K562 (cell line): ENCODE measurements at regions of chr9 and their contacts with region 1.

Region 1: DNA sequence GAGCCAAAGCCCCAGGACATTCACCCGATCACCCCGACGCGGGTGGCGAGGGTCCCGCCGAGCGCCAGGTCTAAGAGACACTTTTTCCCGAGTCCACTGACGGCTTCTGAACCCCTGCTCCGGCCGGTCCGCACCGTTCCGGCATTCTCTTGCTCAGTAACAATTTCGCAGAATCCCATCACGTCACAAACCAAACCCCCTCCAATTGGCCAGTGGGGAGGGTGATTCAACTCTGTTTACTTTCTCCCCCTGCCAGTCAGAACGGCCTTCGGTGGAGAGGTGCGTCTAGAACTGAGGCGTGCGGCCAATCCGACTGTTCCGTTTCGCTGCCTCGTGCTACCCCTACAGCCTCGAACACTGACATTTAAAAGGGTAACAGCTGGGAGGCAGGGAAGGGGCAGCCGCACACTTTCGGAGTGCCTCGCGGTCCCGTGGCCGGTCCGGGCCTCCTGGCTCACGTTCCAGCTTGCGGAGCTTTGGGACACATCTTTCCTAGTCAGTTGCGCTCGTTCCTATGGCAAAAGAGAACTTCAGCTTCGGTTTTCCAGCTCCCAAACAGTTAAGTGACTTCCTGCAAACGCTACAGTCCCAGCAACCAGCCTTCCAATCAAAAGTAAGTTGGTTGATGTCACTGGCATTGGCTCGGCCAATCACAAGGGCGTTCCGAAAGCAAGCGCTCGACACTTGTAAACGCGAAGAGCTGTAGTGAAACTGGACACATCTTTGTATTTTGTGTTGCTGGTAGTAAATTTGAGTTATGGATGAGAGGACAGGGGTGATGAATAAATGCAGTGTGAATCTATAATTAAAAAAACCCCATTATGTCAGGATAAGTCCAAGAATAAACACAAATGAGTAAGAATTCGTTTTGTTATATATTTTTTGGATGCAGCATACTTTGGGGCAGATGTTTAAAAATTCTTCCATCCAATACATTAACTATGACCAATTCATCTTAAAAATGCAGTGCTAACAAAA is at the start of gene KLF9:
- DNase-seq: peak; percentile 52 to 91 (median 75)
- ATAC-seq: peak; percentile 80
- H3K4me3 ChIP-seq: peak within 1 kb of the TSS; percentile 74
- H3K27ac ChIP-seq: peak within 1 kb of the TSS; percentile 99
- H3K4me1 ChIP-seq: peaks cover 19 to 23% of the 10 kb centered on the region in 2 experiments; a peak in 4 of 5 replicates
- H3K27me3 ChIP-seq: no peaks in the 10 kb centered on the region
- CTCF ChIP-seq: no peak
- EP300 ChIP-seq: no peak
- POLR2A ChIP-seq: peak; percentile 86
- RAD21 ChIP-seq: no peak
- polyA plus RNA-seq, gene KLF9: 3.3 to 4.8 TPM

Region 2: DNA sequence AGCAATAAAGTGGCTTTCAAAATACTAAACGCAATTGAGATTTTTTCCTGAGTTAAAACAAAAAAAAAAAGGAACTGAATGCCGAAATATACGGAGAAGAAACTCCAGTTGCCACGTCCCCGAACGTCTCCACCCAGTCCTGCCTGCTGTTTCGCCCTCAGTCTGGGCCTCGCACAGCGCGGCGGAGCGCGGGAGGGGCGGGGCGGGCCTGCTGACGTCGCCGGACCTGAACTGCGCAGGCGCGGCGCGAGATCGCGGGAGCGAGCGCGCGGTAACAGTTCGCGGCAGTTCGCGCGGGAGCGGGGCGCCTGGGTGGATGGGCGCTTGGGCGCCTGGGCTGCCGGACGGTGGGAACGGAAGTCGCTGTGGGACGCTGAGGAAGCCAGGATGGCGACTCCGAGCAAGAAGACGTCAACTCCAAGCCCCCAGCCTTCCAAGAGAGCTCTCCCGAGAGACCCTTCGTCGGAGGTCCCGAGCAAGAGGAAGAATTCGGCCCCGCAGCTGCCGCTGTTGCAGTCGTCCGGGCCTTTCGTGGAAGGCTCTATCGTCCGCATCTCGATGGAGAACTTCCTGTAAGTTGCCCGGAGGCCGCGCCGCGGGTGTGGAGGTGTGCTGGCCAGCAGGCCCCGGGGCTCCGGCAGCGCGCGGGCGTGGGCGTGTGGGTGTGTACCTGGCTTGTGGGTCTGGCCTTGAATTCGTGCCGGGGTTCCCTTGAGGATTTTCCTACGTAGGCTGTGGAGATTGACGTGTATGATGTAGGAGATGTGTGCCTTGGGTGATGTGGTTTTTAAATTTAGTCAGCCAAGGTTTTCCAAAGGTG is 155.2 kb before region 1 on chr9 and contains the start of gene SMC5:
- CTCF ChIA-PET with region 1: no interaction called
- POLR2A ChIA-PET with region 1: interaction called, 4 read pairs
- in situ Hi-C with region 1: no loop called
- intact Hi-C with region 1: loop called (anchors 5 kb)
- DNase-seq: peak; percentile 80 to 90 (median 82)
- ATAC-seq: peak; percentile 88
- H3K4me3 ChIP-seq: peak within 1 kb of the TSS; percentile 88
- H3K27ac ChIP-seq: peak within 1 kb of the TSS; percentile 95
- H3K4me1 ChIP-seq: peaks cover 22 to 26% of the 10 kb centered on the region in 2 experiments; a peak in 4 of 5 replicates
- H3K27me3 ChIP-seq: no peaks in the 10 kb centered on the region
- CTCF ChIP-seq: no peak
- EP300 ChIP-seq: no peak
- POLR2A ChIP-seq: peak; percentile 90
- RAD21 ChIP-seq: no peak
- polyA plus RNA-seq, gene SMC5: 3.5 to 5.1 TPM

Region 3: GRCh38 chr9:70352802-70353201 is 61.3 kb before region 1 on chr9:
- CTCF ChIA-PET with region 1: no interaction called
- POLR2A ChIA-PET with region 1: interaction called, 3 read pairs
- in situ Hi-C with region 1: no loop called
- intact Hi-C with region 1: loop called (anchors 5 kb)
- DNase-seq: peak; percentile 6 to 12 (median 8)
- ATAC-seq: no peak
- H3K4me3 ChIP-seq: no peak overlapping the region
- H3K27ac ChIP-seq: no peak overlapping the region
- H3K4me1 ChIP-seq: no peaks in the 10 kb centered on the region
- H3K27me3 ChIP-seq: no peaks in the 10 kb centered on the region
- CTCF ChIP-seq: peak; percentile 7 to 56 (median 30); a peak in 3 of 6 replicates
- EP300 ChIP-seq: no peak
- POLR2A ChIP-seq: no peak
- RAD21 ChIP-seq: peak; percentile 65 to 73

Region 4: GRCh38 chr9:70398145-70398556 is 15.9 kb before region 1 on chr9:
- CTCF ChIA-PET with region 1: no interaction called
- POLR2A ChIA-PET with region 1: interaction called, 22 read pairs
- in situ Hi-C with region 1: no loop called
- intact Hi-C with region 1: loop called (anchors 2 kb)
- DNase-seq: peak; percentile 20 to 86 (median 48)
- ATAC-seq: peak; percentile 92
- H3K4me3 ChIP-seq: no peak overlapping the region
- H3K27ac ChIP-seq: peak overlapping the region; percentile 26; the same call in 1 of the 3 replicates
- H3K4me1 ChIP-seq: peaks cover 17 to 28% of the 10 kb centered on the region in 2 experiments; a peak in 4 of 5 replicates
- H3K27me3 ChIP-seq: no peaks in the 10 kb centered on the region
- CTCF ChIP-seq: no peak
- EP300 ChIP-seq: peak; percentile 76
- POLR2A ChIP-seq: no peak
- RAD21 ChIP-seq: no peak

Region 5: DNA sequence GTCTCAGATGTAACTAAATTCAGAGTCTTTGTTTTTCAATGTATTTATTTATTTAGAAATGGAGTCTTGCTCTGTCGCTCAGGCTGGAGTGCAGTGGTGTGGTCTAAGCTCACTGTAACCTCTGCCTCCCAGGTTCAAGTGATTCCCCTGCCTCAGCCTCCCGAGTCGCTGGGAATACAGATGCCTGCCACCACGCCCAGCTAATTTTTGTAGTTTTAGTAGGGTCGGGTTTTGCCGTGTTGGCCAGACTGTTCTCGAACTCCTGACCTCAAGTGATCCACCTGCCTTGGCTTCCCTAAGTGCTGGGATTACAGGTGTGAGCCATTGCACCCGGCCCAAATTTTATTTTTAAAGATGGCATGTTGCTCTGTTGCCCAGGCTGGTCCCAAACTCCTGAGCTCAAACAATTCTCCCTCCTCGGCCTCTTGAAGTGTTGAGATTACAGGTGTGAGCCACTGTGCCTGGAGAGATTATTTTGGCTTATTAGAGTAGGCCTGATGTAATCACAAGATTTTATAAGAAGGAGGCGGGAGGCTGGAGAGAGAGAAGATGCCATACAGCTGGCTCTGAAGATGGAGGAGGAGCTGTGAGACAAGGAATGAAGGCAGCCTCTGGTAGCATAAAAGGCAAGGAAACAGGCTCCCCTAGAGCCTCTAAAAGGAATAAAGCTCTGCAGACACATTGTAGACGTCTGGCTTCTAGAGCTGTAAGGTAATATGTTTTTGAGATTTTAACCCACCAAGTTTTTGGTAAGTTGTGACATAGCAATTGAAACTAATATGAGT is 13.3 kb after region 1 on chr9:
- CTCF ChIA-PET with region 1: no interaction called
- POLR2A ChIA-PET with region 1: interaction called, 38 read pairs
- in situ Hi-C with region 1: no loop called
- intact Hi-C with region 1: no loop called
- DNase-seq: no peak
- ATAC-seq: peak; percentile 78
- H3K4me3 ChIP-seq: no peak overlapping the region
- H3K27ac ChIP-seq: no peak overlapping the region
- H3K4me1 ChIP-seq: peaks cover 0 to 4% of the 10 kb centered on the region in 2 experiments; a peak in 3 of 5 replicates
- H3K27me3 ChIP-seq: no peaks in the 10 kb centered on the region
- CTCF ChIP-seq: peak in 2 of 3 experiments; percentile 23 to 24; a peak in 2 of 6 replicates
- EP300 ChIP-seq: no peak
- POLR2A ChIP-seq: no peak
- RAD21 ChIP-seq: no peak; a peak in 1 of 4 replicates

Region 6: GRCh38 chr9:70484210-70485130 is 70.4 kb after region 1 on chr9:
- CTCF ChIA-PET with region 1: interaction called, 4 read pairs
- POLR2A ChIA-PET with region 1: interaction called, 8 read pairs
- in situ Hi-C with region 1: no loop called
- intact Hi-C with region 1: loop called (anchors 1 kb)
- DNase-seq: peak; percentile 72 to 85 (median 76)
- ATAC-seq: peak; percentile 93
- H3K4me3 ChIP-seq: no peak overlapping the region
- H3K27ac ChIP-seq: peak overlapping the region; percentile 99
- H3K4me1 ChIP-seq: peaks cover 15 to 45% of the 10 kb centered on the region in 2 experiments; a peak in 4 of 5 replicates
- H3K27me3 ChIP-seq: no peaks in the 10 kb centered on the region
- CTCF ChIP-seq: peak; percentile 66 to 80 (median 72)
- EP300 ChIP-seq: peak; percentile 27
- POLR2A ChIP-seq: no peak
- RAD21 ChIP-seq: peak; percentile 66 to 76

Region 7: GRCh38 chr9:70602321-70603019 is 188.4 kb after region 1 on chr9:
- CTCF ChIA-PET with region 1: no interaction called
- POLR2A ChIA-PET with region 1: interaction called, 4 read pairs
- in situ Hi-C with region 1: no loop called
- intact Hi-C with region 1: loop called (anchors 5 kb)
- DNase-seq: peak; percentile 25 to 60 (median 41)
- ATAC-seq: peak; percentile 93
- H3K4me3 ChIP-seq: no peak overlapping the region
- H3K27ac ChIP-seq: no peak overlapping the region
- H3K4me1 ChIP-seq: peaks cover 2 to 11% of the 10 kb centered on the region in 2 experiments; a peak in 4 of 5 replicates
- H3K27me3 ChIP-seq: no peaks in the 10 kb centered on the region
- CTCF ChIP-seq: peak; percentile 63 to 84 (median 64)
- EP300 ChIP-seq: no peak
- POLR2A ChIP-seq: no peak
- RAD21 ChIP-seq: peak; percentile 84 to 86

Region 8: GRCh38 chr9:70772601-70773000 is 358.5 kb after region 1 on chr9:
- CTCF ChIA-PET with region 1: no interaction called
- POLR2A ChIA-PET with region 1: no interaction called
- in situ Hi-C with region 1: no loop called
- intact Hi-C with region 1: no loop called
- DNase-seq: no peak
- ATAC-seq: no peak
- H3K4me3 ChIP-seq: no peak overlapping the region
- H3K27ac ChIP-seq: no peak overlapping the region
- H3K4me1 ChIP-seq: no peaks in the 10 kb centered on the region
- H3K27me3 ChIP-seq: no peaks in the 10 kb centered on the region
- CTCF ChIP-seq: no peak
- EP300 ChIP-seq: no peak
- POLR2A ChIP-seq: no peak
- RAD21 ChIP-seq: no peak